Activated T-helper 2 cell treated with anti-CD3 and anti-CD28 coated beads, Interferon-gamma antibody, Interleukin-2, Interleukin-4, amounts not matched to agents 10 μg/mL and 5 μg/mL and 100 μg/mL, durations not matched to agents 14 hours and 24 hours and 36 hours (primary cell): ENCODE measurements at regions of chr12 and their contacts with region 1.

Region 1: DNA sequence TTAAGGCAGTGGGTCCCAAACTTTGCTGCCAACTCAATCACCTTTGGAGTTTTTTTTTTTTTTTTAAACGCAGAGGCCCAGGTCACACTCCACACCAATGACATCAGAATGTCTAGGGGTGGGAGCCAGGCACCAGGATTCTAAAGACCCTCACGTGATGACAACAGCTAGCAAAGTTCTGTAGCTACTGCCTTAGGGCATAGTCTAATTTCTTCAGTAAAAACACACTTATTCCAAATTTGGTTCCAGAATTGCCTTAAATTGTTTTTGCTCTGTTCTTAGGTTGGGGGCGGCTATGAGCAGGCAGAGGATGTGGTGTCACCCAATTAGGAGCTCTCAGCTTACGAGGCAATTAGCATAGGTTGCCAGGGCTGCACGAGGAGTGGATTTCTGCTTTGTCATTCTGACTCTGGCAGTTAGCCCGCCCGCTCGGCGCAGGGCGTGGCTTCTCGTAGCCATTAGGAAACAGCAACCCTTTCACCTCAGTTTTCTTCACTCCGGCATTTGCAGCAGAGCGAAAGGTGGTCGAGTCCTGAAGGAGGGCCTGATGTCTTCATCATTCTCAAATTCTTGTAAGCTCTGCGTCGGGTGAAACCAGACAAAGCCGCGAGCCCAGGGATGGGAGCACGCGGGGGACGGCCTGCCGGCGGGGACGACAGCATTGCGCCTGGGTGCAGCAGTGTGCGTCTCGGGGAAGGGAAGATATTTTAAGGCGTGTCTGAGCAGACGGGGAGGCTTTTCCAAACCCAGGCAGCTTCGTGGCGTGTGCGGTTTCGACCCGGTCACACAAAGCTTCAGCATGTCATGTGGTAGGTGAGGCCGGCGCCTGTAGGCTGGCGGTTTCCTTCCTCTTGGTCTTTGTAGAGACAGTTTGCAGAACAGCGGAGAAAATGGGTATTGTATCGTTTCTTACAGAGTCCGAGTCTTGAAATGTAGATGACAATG is 16.7 kb upstream of the EID3 start:
- DNase-seq: peak; percentile 92
- H3K4me3 Mint-ChIP-seq: peak overlapping the region; percentile 100
- H3K27ac Mint-ChIP-seq: peak overlapping the region; percentile 100
- H3K4me1 Mint-ChIP-seq: peaks cover 24% of the 10 kb centered on the region
- H3K27me3 Mint-ChIP-seq: no peaks in the 10 kb centered on the region

Region 2: DNA sequence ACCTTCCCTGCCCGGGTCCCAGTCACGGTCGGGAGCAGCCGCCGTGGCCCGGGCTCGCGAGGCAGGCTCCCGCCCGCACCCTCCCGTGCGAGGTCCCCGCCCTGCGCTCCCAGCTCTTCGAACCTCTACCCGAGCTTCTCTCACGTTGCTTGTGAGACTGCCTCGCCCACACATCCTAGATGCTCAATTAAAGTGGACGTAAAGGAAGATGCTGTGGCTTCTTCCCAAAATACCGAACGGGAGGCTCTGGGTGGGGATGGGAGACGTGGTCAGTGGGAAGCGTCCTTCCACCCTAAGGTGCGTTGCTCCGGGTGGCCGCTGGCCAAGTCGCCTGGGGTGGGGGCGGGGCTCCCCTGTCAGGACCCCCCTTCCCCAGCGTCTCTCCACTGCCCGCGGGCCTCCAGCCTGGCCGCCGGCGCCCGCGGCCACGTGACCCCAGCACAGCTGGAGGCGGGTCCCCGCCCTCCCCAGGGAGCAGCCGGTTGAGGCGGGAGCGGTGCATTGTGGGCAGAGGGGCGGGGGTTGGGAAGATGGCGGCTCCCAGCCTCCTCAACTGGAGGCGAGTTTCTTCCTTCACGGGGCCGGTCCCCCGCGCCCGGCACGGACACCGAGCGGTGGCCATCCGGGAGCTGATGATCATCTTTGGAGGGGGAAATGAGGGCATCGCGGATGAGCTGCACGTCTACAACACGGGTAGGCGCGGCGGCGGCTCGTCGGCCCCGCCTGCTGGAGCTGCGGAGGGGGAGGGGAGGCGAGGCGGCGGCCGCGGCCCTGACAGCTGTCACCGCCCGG is 222.6 kb before region 1 on chr12 and contains the start of gene HCFC2:
- intact Hi-C with region 1: loop called (anchors 10 kb)
- DNase-seq: peak; percentile 85
- H3K4me3 Mint-ChIP-seq: peak within 1 kb of the TSS; percentile 94
- H3K27ac Mint-ChIP-seq: peak within 1 kb of the TSS; percentile 80
- H3K4me1 Mint-ChIP-seq: peaks cover 27% of the 10 kb centered on the region
- H3K27me3 Mint-ChIP-seq: peaks cover 23% of the 10 kb centered on the region
- total RNA-seq, gene HCFC2: 8.7 and 9.1 TPM in 2 replicates

Region 3: GRCh38 chr12:104215638-104216297 is 71.0 kb before region 1 on chr12 and contains the start of gene TXNRD1:
- intact Hi-C with region 1: loop called (anchors 1 kb)
- DNase-seq: peak; percentile 78
- H3K4me3 Mint-ChIP-seq: peak within 1 kb of the TSS; percentile 72
- H3K27ac Mint-ChIP-seq: peak within 1 kb of the TSS; percentile 61
- H3K4me1 Mint-ChIP-seq: peaks cover 31% of the 10 kb centered on the region
- H3K27me3 Mint-ChIP-seq: no peaks in the 10 kb centered on the region
- total RNA-seq, gene TXNRD1: 83.7 and 96.4 TPM in 2 replicates

Region 4: GRCh38 chr12:104263580-104264358 is 23.0 kb before region 1 on chr12:
- intact Hi-C with region 1: no loop called
- DNase-seq: no peak
- H3K4me3 Mint-ChIP-seq: no peak overlapping the region
- H3K27ac Mint-ChIP-seq: no peak overlapping the region
- H3K4me1 Mint-ChIP-seq: no peaks in the 10 kb centered on the region
- H3K27me3 Mint-ChIP-seq: peaks cover 4% of the 10 kb centered on the region

Region 5: GRCh38 chr12:104336115-104336514 is 49.3 kb after region 1 on chr12:
- intact Hi-C with region 1: loop called (anchors 2 kb)
- DNase-seq: no peak
- H3K4me3 Mint-ChIP-seq: no peak overlapping the region
- H3K27ac Mint-ChIP-seq: peak overlapping the region; percentile 62
- H3K4me1 Mint-ChIP-seq: peaks cover 2% of the 10 kb centered on the region
- H3K27me3 Mint-ChIP-seq: no peaks in the 10 kb centered on the region

Region 6: GRCh38 chr12:105226219-105226618 is 939.4 kb after region 1 on chr12:
- intact Hi-C with region 1: loop called (anchors 5 kb)
- DNase-seq: peak; percentile 21
- H3K4me3 Mint-ChIP-seq: no peak overlapping the region
- H3K27ac Mint-ChIP-seq: peak overlapping the region; percentile 51
- H3K4me1 Mint-ChIP-seq: peaks cover 51% of the 10 kb centered on the region
- H3K27me3 Mint-ChIP-seq: no peaks in the 10 kb centered on the region